ENCODE measurements at regions of chr7 and their contacts with region 1.

Region 1: GRCh38 chr7:132580717-132581285 is 4.5 kb upstream of the PLXNA4 start:
- DNase-seq: peak; percentile 62
- ATAC-seq: peak; percentile 97
- H3K4me3 ChIP-seq: no peak overlapping the region
- H3K27ac ChIP-seq: no peak overlapping the region
- H3K4me1 ChIP-seq: no peaks in the 10 kb centered on the region
- H3K27me3 ChIP-seq: peaks cover 17% of the 10 kb centered on the region; the same call in 1 of the 2 replicates
- CTCF ChIP-seq: peak; percentile 70 to 90 (median 80)
- POLR2A ChIP-seq: no peak
- RAD21 ChIP-seq: peak; percentile 86

Region 2: DNA sequence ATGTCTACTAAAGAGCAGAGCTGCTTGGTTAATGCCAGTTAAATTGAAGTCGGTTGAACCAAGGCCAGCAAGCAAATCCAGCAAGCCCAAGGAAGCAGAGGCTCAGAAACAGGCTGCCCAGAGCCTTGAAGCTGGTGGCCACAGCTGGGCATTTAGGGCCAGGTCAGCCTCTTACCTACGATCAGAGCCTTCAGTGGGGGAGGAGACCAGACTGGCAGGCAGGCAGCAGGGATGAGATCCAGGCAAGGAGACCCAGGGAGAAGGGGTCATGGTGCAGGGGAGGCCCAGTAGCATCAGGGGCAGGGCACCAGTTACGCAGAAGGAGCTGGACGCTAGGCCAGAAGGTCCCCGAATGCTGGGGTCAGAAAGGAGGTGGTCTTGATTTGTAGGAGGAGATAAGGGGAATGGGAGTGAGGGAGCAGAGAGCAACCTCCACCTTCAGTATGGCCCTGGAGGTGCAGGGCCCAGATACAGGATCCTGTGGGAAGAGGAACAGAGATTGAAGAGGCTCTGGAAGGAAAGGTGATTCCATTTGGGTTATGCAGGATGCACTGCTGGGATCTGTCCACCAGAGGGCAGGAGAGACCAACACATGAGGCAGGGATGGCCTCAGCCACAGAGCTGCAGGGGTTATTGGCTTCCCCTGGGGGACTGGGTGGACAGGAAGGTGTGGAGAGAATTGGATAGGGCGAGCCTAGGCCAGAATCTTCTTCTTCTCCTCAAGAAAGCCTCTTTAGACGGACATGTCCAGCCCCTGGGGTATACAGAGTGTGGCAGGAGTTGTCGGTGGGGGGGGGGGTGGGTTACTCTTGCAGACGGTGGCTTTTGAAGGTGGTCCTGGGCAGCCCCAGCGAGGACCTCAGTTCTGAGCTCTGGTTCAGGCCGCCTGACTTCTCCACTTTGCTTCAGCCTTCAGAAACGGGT is 891.8 kb before region 1 on chr7:
- CTCF ChIA-PET with region 1: interaction called, 18 read pairs
- POLR2A ChIA-PET with region 1: no interaction called
- RAD21 ChIA-PET with region 1: interaction called, 3 to 4 read pairs
- intact Hi-C with region 1: loop called (anchors 1 kb)
- DNase-seq: peak; percentile 23
- ATAC-seq: peak; percentile 79
- H3K4me3 ChIP-seq: no peak overlapping the region
- H3K27ac ChIP-seq: no peak overlapping the region
- H3K4me1 ChIP-seq: peaks cover 0 to 8% of the 10 kb centered on the region in 2 experiments; a peak in 3 of 4 replicates
- H3K27me3 ChIP-seq: peaks cover 34% of the 10 kb centered on the region
- CTCF ChIP-seq: peak; percentile 78 to 98 (median 93); a peak in 5 of 6 replicates
- POLR2A ChIP-seq: no peak
- RAD21 ChIP-seq: peak; percentile 94

Region 3: GRCh38 chr7:131859147-131859821 is 721.5 kb before region 1 on chr7:
- CTCF ChIA-PET with region 1: interaction called, 10 read pairs
- POLR2A ChIA-PET with region 1: no interaction called
- RAD21 ChIA-PET with region 1: no interaction called
- intact Hi-C with region 1: loop called (anchors 1 kb)
- DNase-seq: peak; percentile 43
- ATAC-seq: peak; percentile 99
- H3K4me3 ChIP-seq: no peak overlapping the region
- H3K27ac ChIP-seq: no peak overlapping the region
- H3K4me1 ChIP-seq: peaks cover 0 to 6% of the 10 kb centered on the region in 2 experiments; a peak in 1 of 4 replicates
- H3K27me3 ChIP-seq: peaks cover 24% of the 10 kb centered on the region
- CTCF ChIP-seq: peak; percentile 65 to 93 (median 83); a peak in 5 of 6 replicates
- POLR2A ChIP-seq: no peak
- RAD21 ChIP-seq: peak; percentile 81

Region 4: DNA sequence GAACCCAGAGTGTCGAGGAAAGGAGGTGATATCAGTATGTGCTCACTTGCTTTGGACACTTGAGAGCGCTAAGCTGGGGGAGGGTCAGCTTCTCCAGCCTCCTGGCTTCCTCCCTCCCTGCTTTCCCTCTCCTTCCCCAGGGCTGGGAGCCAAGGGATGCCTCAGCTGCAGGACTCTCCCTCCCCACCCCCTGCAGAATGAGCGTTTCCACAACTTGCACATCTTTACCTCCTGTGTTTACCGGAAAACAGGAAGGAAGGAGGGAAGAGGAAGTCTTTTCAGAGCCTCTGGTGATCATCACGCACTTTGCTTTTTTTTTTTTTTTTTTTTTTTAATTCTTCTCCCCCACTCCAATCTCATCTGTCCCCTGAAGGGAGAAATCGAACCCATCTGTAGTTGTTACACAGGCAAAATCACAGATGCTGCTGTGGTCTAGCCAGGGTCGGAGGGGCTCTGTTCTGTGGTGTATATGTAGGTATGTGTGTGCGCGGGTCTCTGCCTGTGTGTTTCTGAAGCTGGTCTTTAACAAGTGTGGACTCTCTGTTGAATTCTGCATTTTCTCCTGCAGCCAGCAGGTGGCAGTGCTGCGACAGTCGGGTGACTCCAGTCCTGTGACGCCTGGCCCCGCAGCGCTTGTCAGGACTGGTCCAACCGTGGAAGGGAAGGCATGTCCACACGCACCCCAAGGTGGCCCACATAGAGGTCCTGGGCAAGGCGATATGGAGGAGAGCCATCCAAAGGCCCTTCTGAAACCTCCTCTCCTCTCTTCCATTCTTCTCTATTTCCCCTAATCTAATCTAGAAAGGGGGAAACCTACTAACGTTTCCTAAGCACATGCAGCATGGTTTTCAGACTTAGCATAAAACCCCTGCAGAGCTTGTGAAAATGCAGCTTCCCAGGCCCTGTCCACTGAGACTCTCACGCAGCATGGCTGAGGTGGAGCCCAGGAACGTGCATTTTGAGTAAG is 262.2 kb before region 1 on chr7:
- CTCF ChIA-PET with region 1: interaction called, 21 read pairs
- POLR2A ChIA-PET with region 1: no interaction called
- RAD21 ChIA-PET with region 1: interaction called, 4 to 9 read pairs
- intact Hi-C with region 1: loop called (anchors 1 kb)
- DNase-seq: peak; percentile 68
- ATAC-seq: peak; percentile 99
- H3K4me3 ChIP-seq: no peak overlapping the region
- H3K27ac ChIP-seq: no peak overlapping the region
- H3K4me1 ChIP-seq: 0 out of 4 replicates have a peak, but pooled peaks cover 0 to 3% of the 10 kb centered on the region in 2 experiments
- H3K27me3 ChIP-seq: peaks cover 52% of the 10 kb centered on the region
- CTCF ChIP-seq: peak; percentile 74 to 82 (median 75)
- POLR2A ChIP-seq: no peak
- RAD21 ChIP-seq: peak; percentile 82

Region 5: GRCh38 chr7:134016223-134016941 is 1435.6 kb after region 1 on chr7:
- CTCF ChIA-PET with region 1: no interaction called
- POLR2A ChIA-PET with region 1: no interaction called
- RAD21 ChIA-PET with region 1: no interaction called
- intact Hi-C with region 1: loop called (anchors 10 kb)
- DNase-seq: peak; percentile 12
- ATAC-seq: peak; percentile 66
- H3K4me3 ChIP-seq: no peak overlapping the region
- H3K27ac ChIP-seq: no peak overlapping the region
- H3K4me1 ChIP-seq: no peaks in the 10 kb centered on the region
- H3K27me3 ChIP-seq: no peaks in the 10 kb centered on the region
- CTCF ChIP-seq: peak; percentile 41 to 79 (median 76); a peak in 5 of 6 replicates
- POLR2A ChIP-seq: no peak
- RAD21 ChIP-seq: peak; percentile 71

Measured in HCT116 (cell line).